ENCODE measurements at regions of chr18 and their contacts with region 1.

Region 1: DNA sequence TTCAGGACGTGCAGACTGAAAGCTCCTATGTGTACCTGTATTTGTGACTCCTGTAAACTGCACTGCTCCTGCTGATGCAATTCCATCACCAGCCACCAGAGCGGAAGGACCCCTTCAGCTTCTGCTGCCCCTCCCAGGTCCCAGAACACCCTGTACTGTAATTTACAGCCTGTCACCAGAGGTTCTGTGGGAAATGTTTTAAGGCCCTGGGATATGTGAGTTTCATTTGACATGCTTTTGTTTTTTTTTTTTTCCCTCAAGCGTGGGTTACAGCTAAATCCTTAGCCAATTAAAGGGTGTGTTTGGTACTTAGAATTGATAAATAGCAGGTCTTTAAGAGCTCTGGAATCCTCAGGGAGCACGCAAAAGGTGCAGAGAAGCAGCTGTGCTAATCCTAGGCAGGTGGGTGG is 79.4 kb downstream of the KCTD1 start:
- DNase-seq: no peak
- H3K4me3 ChIP-seq: no peak overlapping the region
- H3K27ac ChIP-seq: no peak overlapping the region
- H3K4me1 ChIP-seq: no peaks in the 10 kb centered on the region
- H3K27me3 ChIP-seq: no peaks in the 10 kb centered on the region
- CTCF ChIP-seq: peak in 1 of 2 experiments; percentile 22

Region 2: DNA sequence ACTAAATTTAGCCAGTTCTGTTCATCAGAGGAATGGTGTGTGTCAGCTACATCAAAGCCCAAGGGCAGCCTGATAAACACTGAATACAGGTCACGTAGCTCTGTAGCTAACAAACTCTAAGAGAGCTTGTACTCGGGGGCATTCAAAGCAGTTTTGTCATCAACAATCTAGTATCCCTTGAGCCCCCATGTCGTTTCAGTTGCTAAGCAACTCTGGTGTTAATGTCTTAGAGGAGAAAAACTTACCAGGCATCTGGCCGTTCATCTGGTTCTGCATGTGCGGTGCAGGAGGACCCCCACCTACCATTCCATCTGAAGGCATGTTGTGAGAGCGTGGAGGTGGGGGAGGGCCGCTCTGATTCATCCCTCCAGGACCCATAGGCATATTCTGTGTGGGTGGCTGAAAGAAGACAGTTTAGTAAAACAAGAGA is 411.6 kb before region 1 on chr18:
- intact Hi-C with region 1: no loop called
- DNase-seq: no peak
- H3K4me3 ChIP-seq: no peak overlapping the region
- H3K27ac ChIP-seq: no peak overlapping the region
- H3K4me1 ChIP-seq: no peaks in the 10 kb centered on the region
- H3K27me3 ChIP-seq: no peaks in the 10 kb centered on the region
- CTCF ChIP-seq: no peak

Region 3: GRCh38 chr18:26190506-26190905 is 278.4 kb before region 1 on chr18:
- intact Hi-C with region 1: loop called (anchors 5 kb)
- DNase-seq: no peak
- H3K4me3 ChIP-seq: no peak overlapping the region
- H3K27ac ChIP-seq: no peak overlapping the region
- H3K4me1 ChIP-seq: no peaks in the 10 kb centered on the region
- H3K27me3 ChIP-seq: no peaks in the 10 kb centered on the region
- CTCF ChIP-seq: no peak